ENCODE measurements at regions of chr3 and their contacts with region 1.

Region 1: DNA sequence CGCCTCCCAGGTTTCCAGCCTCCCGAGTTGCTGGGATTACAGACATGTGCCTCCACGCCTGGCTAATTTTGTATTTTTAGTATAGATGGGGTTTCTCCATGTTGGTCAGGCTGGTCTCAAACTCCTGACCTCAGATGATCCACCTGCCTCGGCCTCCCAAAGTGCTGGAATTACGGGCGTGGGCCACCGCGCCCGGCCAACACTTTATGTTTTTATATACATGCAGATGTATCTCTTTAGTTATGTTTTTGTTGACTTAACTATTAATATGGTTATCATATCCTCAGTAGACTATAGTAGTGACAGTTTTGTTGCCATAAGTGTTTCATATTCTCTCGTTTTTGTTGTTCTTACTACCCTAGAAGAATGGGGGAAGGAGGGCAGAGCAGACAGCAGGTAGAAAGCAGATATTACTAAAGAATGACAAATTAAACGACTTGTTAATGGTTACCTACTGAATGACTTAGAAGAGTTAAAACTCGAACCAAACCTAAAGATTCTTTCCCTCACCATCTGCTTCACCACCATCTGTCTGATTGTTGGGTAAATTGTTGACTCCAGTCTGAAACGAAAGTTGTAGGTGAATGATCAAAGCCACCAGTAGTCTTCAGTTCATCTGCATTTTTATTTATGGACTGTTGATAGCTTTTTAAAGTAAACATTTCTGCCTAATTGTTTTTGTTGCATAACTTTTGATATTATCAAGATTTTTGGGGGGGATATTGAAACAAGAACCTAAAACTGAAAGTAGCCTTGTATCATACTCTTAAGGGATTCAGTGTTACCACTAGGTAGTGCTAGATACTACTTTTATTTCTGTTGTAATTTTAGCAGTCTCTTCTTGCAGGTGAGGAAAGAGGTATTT is 89.3 kb downstream of the RASA2 start:
- DNase-seq: peak in 2 of 4 experiments; percentile 10 to 15
- ATAC-seq: peak; percentile 83
- H3K4me3 ChIP-seq: no peak overlapping the region
- H3K27ac ChIP-seq: no peak overlapping the region
- H3K4me1 ChIP-seq: no peaks in the 10 kb centered on the region
- H3K27me3 ChIP-seq: no peaks in the 10 kb centered on the region
- CTCF ChIP-seq: peak in 2 of 3 experiments; percentile 19 to 62; a peak in 4 of 6 replicates
- EP300 ChIP-seq: 0 out of 2 replicates have a peak, but pooled peaks have one; percentile 27
- POLR2A ChIP-seq: no peak
- RAD21 ChIP-seq: peak; percentile 66 to 68

Region 2: GRCh38 chr3:140319696-140320200 is 1256.4 kb before region 1 on chr3:
- CTCF ChIA-PET with region 1: no interaction called
- POLR2A ChIA-PET with region 1: no interaction called
- in situ Hi-C with region 1: no loop called
- intact Hi-C with region 1: no loop called
- DNase-seq: no peak
- ATAC-seq: no peak
- H3K4me3 ChIP-seq: no peak overlapping the region
- H3K27ac ChIP-seq: no peak overlapping the region
- H3K4me1 ChIP-seq: no peaks in the 10 kb centered on the region
- H3K27me3 ChIP-seq: no peaks in the 10 kb centered on the region
- CTCF ChIP-seq: no peak
- EP300 ChIP-seq: no peak
- POLR2A ChIP-seq: no peak
- RAD21 ChIP-seq: no peak

Region 3: DNA sequence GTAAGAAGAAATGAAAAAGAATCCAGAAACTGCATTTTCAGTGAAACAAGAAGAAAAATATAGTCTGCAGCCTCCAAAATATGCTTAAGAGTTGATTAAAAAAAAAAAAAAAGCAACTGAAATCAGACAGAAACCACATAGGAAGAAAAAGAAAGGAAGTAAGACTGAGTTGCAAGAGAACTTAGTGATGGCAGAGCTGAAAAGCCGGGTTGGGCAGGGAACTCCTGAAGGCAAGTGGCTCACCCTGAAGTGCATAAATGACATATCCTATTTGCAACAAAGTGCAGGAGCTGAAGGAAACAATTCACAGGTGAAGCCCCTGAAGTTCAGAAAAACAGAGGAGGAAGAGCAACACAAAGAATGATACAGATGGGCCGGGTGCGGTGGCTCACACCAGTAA is 743.2 kb before region 1 on chr3:
- CTCF ChIA-PET with region 1: no interaction called
- POLR2A ChIA-PET with region 1: no interaction called
- in situ Hi-C with region 1: no loop called
- intact Hi-C with region 1: no loop called
- DNase-seq: no peak
- ATAC-seq: no peak
- H3K4me3 ChIP-seq: no peak overlapping the region
- H3K27ac ChIP-seq: no peak overlapping the region
- H3K4me1 ChIP-seq: no peaks in the 10 kb centered on the region
- H3K27me3 ChIP-seq: peaks cover 0 to 5% of the 10 kb centered on the region in 2 experiments; a peak in 2 of 5 replicates
- CTCF ChIP-seq: no peak
- EP300 ChIP-seq: no peak
- POLR2A ChIP-seq: no peak
- RAD21 ChIP-seq: no peak

Region 4: DNA sequence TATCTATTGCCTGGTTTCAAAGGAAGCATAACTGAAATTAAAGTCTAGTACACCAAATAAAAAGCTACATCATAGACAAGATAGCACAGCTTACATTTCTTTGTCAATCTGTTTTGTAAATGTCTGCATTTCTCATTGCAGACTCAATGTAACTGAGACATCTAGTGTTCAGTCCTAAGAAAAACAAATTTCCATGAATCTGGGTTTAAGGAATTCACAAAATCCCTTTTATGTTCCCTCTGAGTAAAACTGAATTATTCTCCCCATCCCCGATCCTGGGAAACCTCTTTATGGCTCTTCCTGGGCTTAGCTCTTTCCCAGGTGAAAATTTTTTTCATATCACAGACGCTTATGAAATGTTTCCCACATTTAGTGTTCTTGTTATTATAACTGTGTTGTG is 110.9 kb before region 1 on chr3:
- CTCF ChIA-PET with region 1: no interaction called
- POLR2A ChIA-PET with region 1: no interaction called
- in situ Hi-C with region 1: no loop called
- intact Hi-C with region 1: no loop called
- DNase-seq: no peak
- ATAC-seq: no peak
- H3K4me3 ChIP-seq: no peak overlapping the region
- H3K27ac ChIP-seq: no peak overlapping the region
- H3K4me1 ChIP-seq: peaks cover 0 to 9% of the 10 kb centered on the region in 2 experiments; a peak in 2 of 5 replicates
- H3K27me3 ChIP-seq: no peaks in the 10 kb centered on the region
- CTCF ChIP-seq: peak in 1 of 3 experiments; percentile 11; a peak in 1 of 6 replicates
- EP300 ChIP-seq: no peak
- POLR2A ChIP-seq: no peak
- RAD21 ChIP-seq: no peak; a peak in 1 of 4 replicates

Region 5: DNA sequence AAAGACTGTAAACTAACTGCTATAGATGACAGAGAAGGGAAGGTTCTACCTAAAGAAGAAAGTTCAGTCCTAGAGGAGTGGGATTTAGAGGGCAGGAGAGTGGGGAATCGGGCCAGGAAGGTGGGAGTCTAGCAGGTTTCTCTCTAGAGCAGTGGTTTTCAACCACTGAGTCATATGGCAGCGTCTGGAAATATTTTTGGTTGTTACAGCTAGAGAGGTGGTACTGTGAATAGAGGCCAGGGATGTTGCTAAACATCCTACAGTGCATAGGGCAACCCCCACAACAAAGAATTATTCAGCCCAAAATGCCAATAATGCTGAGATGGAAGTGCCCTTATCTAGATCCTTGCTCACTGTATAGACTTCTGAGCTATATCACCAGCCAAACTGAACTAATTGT is 329.0 kb after region 1 on chr3:
- CTCF ChIA-PET with region 1: no interaction called
- POLR2A ChIA-PET with region 1: no interaction called
- in situ Hi-C with region 1: loop called (anchors 10 kb)
- intact Hi-C with region 1: loop called (anchors 10 kb)
- DNase-seq: no peak
- ATAC-seq: no peak
- H3K4me3 ChIP-seq: no peak overlapping the region
- H3K27ac ChIP-seq: no peak overlapping the region
- H3K4me1 ChIP-seq: no peaks in the 10 kb centered on the region; a peak in 1 of 5 replicates
- H3K27me3 ChIP-seq: no peaks in the 10 kb centered on the region
- CTCF ChIP-seq: no peak
- EP300 ChIP-seq: no peak
- POLR2A ChIP-seq: no peak
- RAD21 ChIP-seq: no peak

Region 6: GRCh38 chr3:141913150-141913811 is 337.2 kb after region 1 on chr3:
- CTCF ChIA-PET with region 1: no interaction called
- POLR2A ChIA-PET with region 1: no interaction called
- in situ Hi-C with region 1: loop called (anchors 10 kb)
- intact Hi-C with region 1: loop called (anchors 10 kb)
- DNase-seq: peak; percentile 50 to 72 (median 54)
- ATAC-seq: peak; percentile 82
- H3K4me3 ChIP-seq: no peak overlapping the region
- H3K27ac ChIP-seq: no peak overlapping the region
- H3K4me1 ChIP-seq: no peaks in the 10 kb centered on the region
- H3K27me3 ChIP-seq: no peaks in the 10 kb centered on the region
- CTCF ChIP-seq: peak; percentile 49 to 67 (median 62)
- EP300 ChIP-seq: no peak
- POLR2A ChIP-seq: no peak
- RAD21 ChIP-seq: peak; percentile 51 to 81